Naive thymus-derived CD4-positive, alpha-beta T cell (primary cell): ENCODE measurements at regions of chr11 and their contacts with region 1.

Region 1: DNA sequence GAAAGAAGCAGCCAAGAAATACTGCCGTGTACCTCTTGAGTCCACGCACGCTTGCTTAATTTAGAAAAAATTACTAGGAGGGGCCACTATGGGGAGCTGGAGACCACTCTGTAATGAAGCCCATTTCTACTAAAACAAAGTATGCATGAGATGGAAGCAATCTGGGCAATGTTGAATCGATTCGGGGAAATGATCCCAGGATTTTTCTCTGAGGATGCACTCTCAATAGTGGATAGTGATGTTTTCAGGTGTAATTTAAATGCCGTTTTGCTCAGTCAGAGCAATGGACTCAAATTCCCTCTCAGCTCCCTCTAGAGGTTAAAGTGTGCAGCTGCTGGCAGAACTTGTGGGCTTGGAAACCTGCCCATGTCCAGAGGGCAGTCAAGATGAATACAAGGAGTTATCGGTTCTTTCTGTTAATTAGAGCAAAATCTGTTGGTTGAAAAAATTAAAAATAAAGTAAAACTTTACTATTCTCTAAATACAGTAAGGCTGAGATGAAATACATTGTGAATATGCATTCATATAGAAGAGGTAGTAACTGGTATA is 64.1 kb downstream of the ME3 start:
- DNase-seq: peak in 2 of 9 donors; percentile 7 to 36
- ATAC-seq: peak; percentile 78
- H3K4me3 ChIP-seq: no peak overlapping the region
- H3K4me3 Mint-ChIP-seq: peak overlapping the region in 1 of 10 donors; percentile 16
- H3K27ac ChIP-seq: no peak overlapping the region
- H3K27ac Mint-ChIP-seq: no peak overlapping the region
- H3K4me1 ChIP-seq: no peaks in the 10 kb centered on the region
- H3K4me1 Mint-ChIP-seq: peaks cover 0 to 14% (median 7%) of the 10 kb centered on the region in 7 donors
- H3K27me3 ChIP-seq: no peaks in the 10 kb centered on the region
- H3K27me3 Mint-ChIP-seq: peaks cover 0 to 4% (median 0%) of the 10 kb centered on the region in 5 donors

Region 2: DNA sequence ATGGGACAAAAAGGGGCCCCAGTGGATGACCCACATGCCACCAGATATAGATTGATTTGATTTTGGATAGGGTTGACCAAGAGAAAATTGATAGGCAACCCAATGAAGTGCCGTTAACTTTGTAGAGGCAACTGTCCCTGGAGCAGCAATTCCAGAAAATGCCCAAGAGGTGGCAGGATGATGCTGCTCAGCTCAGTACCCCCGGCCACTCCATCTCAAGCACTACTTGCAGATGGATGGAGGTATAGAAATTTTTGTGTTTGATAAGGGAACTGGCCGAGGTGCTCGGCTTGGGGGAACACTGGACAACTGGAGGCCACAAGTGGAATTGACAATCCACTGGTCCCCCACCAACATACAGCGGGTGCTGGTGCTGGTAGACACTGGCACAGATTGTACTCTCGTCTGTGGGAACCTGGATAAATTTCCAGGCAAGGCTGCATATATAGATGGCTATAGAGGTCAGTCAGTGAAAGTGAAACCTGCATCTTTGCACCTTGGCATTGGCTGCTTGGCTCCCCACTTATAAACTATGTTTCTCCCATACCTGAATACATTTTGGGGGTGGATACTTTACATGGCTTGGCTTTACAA is 666.8 kb before region 1 on chr11:
- CTCF ChIA-PET with region 1: no interaction called
- POLR2A ChIA-PET with region 1: no interaction called
- intact Hi-C with region 1: loop called in 1 of 2 experiments (anchors 5 kb)
- DNase-seq: no peak
- ATAC-seq: peak; percentile 61
- H3K4me3 ChIP-seq: no peak overlapping the region
- H3K4me3 Mint-ChIP-seq: no peak overlapping the region
- H3K27ac ChIP-seq: no peak overlapping the region
- H3K27ac Mint-ChIP-seq: no peak overlapping the region
- H3K4me1 ChIP-seq: no peaks in the 10 kb centered on the region
- H3K4me1 Mint-ChIP-seq: peaks cover 0 to 10% (median 0%) of the 10 kb centered on the region in 7 donors
- H3K27me3 ChIP-seq: no peaks in the 10 kb centered on the region
- H3K27me3 Mint-ChIP-seq: no peaks in the 10 kb centered on the region

Region 3: DNA sequence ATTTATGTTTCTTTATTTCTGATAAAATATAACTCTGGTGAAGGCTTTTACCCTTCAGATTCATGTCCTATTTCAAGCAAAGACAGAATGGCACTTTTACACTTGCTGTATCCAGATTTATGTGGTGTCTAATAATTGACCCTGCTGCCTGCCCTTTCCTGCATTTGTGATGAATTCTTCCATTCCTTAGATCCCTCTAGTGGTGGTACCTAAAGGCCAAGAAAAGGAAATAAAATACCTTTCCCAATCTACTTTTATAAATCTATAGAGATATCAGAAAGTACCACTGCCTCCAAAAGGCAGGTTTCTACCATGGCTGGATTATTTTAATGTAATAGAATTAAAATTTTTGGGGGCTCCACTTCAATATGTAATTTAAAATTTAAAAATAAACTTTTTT is 199.5 kb before region 1 on chr11:
- CTCF ChIA-PET with region 1: no interaction called
- POLR2A ChIA-PET with region 1: no interaction called
- intact Hi-C with region 1: no loop called
- DNase-seq: no peak
- ATAC-seq: no peak
- H3K4me3 ChIP-seq: no peak overlapping the region
- H3K4me3 Mint-ChIP-seq: no peak overlapping the region
- H3K27ac ChIP-seq: no peak overlapping the region
- H3K27ac Mint-ChIP-seq: no peak overlapping the region
- H3K4me1 ChIP-seq: no peaks in the 10 kb centered on the region
- H3K4me1 Mint-ChIP-seq: no peaks in the 10 kb centered on the region
- H3K27me3 ChIP-seq: no peaks in the 10 kb centered on the region
- H3K27me3 Mint-ChIP-seq: no peaks in the 10 kb centered on the region

Region 4: GRCh38 chr11:86818466-86819192 is 210.3 kb after region 1 on chr11:
- CTCF ChIA-PET with region 1: no interaction called
- POLR2A ChIA-PET with region 1: no interaction called
- intact Hi-C with region 1: loop called (anchors 1 kb)
- DNase-seq: peak in 7 of 9 donors; percentile 13 to 42 (median 34)
- ATAC-seq: peak; percentile 56
- H3K4me3 ChIP-seq: no peak overlapping the region
- H3K4me3 Mint-ChIP-seq: no peak overlapping the region
- H3K27ac ChIP-seq: no peak overlapping the region
- H3K27ac Mint-ChIP-seq: peak overlapping the region in 1 of 9 donors; percentile 39
- H3K4me1 ChIP-seq: no peaks in the 10 kb centered on the region
- H3K4me1 Mint-ChIP-seq: peaks cover 0 to 7% (median 5%) of the 10 kb centered on the region in 7 donors
- H3K27me3 ChIP-seq: no peaks in the 10 kb centered on the region
- H3K27me3 Mint-ChIP-seq: peaks cover 3 to 31% (median 13%) of the 10 kb centered on the region in 5 donors